ENCODE measurements at regions of chr17 and their contacts with region 1.

Region 1: DNA sequence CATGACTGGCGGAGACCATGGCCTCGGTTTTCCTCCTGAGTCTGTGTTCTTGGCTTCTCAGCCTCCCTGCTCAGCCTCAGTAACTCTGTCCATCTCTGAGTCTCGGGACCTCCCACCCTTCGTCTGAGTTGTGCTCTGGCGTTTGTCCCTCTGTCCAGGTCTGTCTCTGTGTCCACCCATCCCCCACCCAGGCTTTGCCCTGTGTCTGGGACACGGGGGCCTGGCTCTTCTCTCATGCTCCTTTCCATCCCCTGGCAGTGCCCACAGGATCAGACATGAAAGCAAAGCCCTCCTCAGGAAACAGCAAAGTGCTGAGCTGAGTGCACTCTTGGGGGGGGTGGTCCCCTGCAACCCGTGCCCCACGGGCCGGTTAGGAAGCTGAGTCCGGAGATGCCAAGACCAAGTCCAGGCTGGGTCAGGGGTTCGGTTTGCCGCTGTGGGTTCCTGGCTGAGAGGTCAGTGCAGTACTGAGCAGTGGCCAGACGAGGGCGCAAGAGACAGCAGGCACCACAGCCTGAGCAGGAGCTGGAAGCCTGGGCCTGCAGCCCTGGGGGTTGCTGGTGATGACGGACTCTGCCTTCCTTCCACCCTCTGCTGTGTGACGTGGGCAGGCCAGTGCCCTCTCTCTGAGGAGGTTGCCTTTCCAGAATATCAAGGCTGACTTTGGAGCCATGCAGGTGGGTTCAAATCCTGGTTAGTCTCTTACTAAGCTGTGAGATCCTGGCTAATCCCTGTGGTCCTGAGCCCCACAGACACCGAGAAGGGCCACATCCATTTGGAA is 2.5 kb downstream of the P2RX1 start:
- DNase-seq: peak; percentile 73
- H3K4me3 ChIP-seq: no peak overlapping the region
- H3K27ac ChIP-seq: no peak overlapping the region
- H3K4me1 ChIP-seq: peaks cover 15% of the 10 kb centered on the region
- H3K27me3 ChIP-seq: no peaks in the 10 kb centered on the region
- CTCF ChIP-seq: peak; percentile 97 to 99
- POLR2A ChIP-seq: no peak

Region 2: DNA sequence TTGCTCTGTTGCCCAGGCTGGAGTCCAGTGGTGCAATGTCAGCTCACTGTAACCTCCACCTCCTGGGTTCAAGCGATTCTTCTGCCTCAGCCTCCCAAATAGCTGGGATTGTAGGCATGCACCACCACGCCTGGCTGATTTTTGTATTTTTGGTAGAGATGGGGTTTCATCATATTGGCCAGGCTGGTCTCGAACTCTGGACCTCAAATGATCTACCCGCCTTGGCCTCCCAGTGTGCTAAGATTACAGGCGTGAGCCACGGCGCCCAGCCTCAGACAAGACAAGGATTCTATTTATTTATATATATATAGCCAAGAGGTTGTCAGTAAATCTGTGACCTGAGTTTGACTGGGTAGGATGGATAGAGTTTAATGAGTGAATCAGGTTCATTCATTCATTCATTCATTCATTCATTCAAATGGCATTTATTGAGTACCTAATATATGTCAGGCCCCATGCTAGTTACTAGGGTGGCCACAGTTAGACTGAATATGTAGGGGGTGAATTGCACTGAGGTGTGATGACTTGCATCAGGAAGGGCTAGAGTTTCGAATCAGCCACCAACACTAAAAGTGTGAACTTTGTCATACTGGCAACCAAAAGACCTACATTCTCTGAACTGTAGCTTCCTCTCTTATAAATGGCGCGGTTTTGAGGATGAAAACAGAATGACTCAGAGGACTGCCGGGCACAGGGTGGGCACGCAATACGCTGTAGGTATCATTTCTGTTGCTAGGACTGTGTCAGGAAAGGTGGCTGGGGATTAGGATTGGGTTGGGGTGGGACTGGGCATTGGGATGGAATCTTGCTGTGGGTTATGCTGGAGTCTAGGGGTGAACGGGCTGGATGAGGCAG is 150.6 kb before region 1 on chr17:
- CTCF ChIA-PET with region 1: no interaction called
- POLR2A ChIA-PET with region 1: no interaction called
- dilution Hi-C with region 1: no loop called
- intact Hi-C with region 1: no loop called
- DNase-seq: no peak
- H3K4me3 ChIP-seq: no peak overlapping the region
- H3K27ac ChIP-seq: no peak overlapping the region
- H3K4me1 ChIP-seq: peaks cover 2% of the 10 kb centered on the region
- H3K27me3 ChIP-seq: no peaks in the 10 kb centered on the region
- CTCF ChIP-seq: no peak
- POLR2A ChIP-seq: no peak

Region 3: DNA sequence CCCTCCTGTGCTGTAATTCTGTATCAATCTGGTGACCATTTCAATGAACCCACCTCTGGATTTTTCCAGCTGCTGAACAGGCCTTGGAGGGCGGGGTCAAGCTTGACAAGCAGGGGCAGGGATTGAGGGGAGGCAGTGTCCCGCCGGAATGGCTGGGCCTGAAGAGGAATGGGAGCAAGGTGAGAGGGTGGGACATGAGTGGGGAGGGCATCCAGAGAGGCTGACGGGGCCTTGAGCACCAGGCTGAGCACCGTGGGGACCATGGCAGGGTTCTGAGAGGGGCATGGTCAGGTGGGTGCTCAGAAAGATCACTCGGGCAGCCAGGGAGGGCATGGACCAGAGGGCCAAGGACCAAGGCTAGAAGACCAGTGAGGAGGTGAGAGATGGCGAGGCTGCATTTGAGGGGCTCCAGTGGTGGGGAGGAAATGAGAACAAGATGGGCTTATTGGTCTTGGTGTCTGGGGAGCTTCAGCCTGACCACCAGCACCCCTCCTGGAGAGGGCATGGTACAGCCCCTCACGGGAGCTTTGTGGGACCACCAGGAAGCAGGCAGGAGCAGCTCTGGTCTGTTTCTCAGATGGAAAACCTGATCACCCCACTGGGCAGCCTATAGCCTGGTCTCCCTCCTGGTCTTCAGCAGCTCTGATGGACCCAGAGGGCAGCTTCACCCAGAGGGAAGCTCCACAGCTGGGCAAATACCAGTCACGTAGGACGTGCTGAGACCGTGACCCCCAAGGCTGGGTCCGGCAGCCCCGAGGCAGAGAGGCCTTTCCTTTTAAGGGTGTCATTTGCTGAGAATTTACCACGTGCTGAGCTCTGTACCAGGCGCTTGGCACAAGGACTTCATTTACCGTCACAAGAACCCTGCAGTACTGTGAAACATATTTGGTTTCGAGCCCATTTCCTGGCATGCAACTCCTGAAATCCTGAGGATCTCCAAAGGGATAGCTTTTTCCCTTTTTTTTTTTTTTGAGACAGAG is 56.3 kb before region 1 on chr17:
- CTCF ChIA-PET with region 1: interaction called, 13 read pairs
- POLR2A ChIA-PET with region 1: no interaction called
- dilution Hi-C with region 1: no loop called
- intact Hi-C with region 1: no loop called
- DNase-seq: no peak
- H3K4me3 ChIP-seq: no peak overlapping the region
- H3K27ac ChIP-seq: no peak overlapping the region
- H3K4me1 ChIP-seq: no peaks in the 10 kb centered on the region
- H3K27me3 ChIP-seq: no peaks in the 10 kb centered on the region
- CTCF ChIP-seq: no peak
- POLR2A ChIP-seq: no peak

Region 4: GRCh38 chr17:3893003-3893719 is 20.6 kb before region 1 on chr17 and contains the start of gene CAMKK1:
- CTCF ChIA-PET with region 1: interaction called, 82 read pairs
- POLR2A ChIA-PET with region 1: no interaction called
- dilution Hi-C with region 1: no loop called
- intact Hi-C with region 1: no loop called
- DNase-seq: peak; percentile 83
- H3K4me3 ChIP-seq: peak within 1 kb of the TSS; percentile 41 to 59 (median 52)
- H3K27ac ChIP-seq: no peak within 1 kb of the TSS
- H3K4me1 ChIP-seq: peaks cover 52% of the 10 kb centered on the region
- H3K27me3 ChIP-seq: no peaks in the 10 kb centered on the region
- CTCF ChIP-seq: no peak
- POLR2A ChIP-seq: no peak
- total RNA-seq, gene CAMKK1: 5.7 and 6.1 TPM in 2 replicates

Region 5: GRCh38 chr17:3935140-3935542 is 21.4 kb after region 1 on chr17:
- CTCF ChIA-PET with region 1: interaction called, 47 read pairs
- POLR2A ChIA-PET with region 1: no interaction called
- dilution Hi-C with region 1: no loop called
- intact Hi-C with region 1: loop called (anchors 1 kb)
- DNase-seq: peak; percentile 75
- H3K4me3 ChIP-seq: no peak overlapping the region
- H3K27ac ChIP-seq: no peak overlapping the region
- H3K4me1 ChIP-seq: no peaks in the 10 kb centered on the region
- H3K27me3 ChIP-seq: no peaks in the 10 kb centered on the region
- CTCF ChIP-seq: peak; percentile 83 to 94
- POLR2A ChIP-seq: no peak

Region 6: GRCh38 chr17:4004517-4005295 is 91.0 kb after region 1 on chr17:
- CTCF ChIA-PET with region 1: interaction called, 84 read pairs
- POLR2A ChIA-PET with region 1: interaction called, 4 read pairs
- dilution Hi-C with region 1: no loop called
- intact Hi-C with region 1: loop called (anchors 1 kb)
- DNase-seq: peak; percentile 49
- H3K4me3 ChIP-seq: no peak overlapping the region
- H3K27ac ChIP-seq: no peak overlapping the region
- H3K4me1 ChIP-seq: peaks cover 9% of the 10 kb centered on the region
- H3K27me3 ChIP-seq: no peaks in the 10 kb centered on the region
- CTCF ChIP-seq: peak; percentile 90 to 92
- POLR2A ChIP-seq: no peak

Region 7: DNA sequence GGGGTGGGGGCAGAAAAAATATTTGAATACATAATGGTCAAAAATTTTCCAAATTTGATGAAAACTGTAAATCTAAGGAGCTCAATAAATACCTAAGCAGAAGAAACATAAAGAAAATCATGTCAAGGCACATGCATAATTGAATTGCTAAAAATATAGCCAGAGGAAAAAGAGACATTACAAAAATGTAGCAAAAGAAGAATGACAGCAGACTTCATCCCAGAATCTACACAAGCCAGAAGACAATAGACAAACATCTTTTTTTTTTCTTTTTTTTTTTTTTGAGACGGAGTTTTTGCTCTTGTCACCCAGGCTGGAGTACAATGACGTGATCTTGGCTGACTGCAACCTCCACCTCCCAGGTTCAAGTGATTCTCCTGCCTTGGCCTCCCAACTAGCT is 112.5 kb after region 1 on chr17:
- CTCF ChIA-PET with region 1: interaction called, 11 read pairs
- POLR2A ChIA-PET with region 1: no interaction called
- dilution Hi-C with region 1: no loop called
- intact Hi-C with region 1: no loop called
- DNase-seq: no peak
- H3K4me3 ChIP-seq: no peak overlapping the region
- H3K27ac ChIP-seq: no peak overlapping the region
- H3K4me1 ChIP-seq: no peaks in the 10 kb centered on the region
- H3K27me3 ChIP-seq: no peaks in the 10 kb centered on the region
- CTCF ChIP-seq: no peak
- POLR2A ChIP-seq: no peak

Measured in endothelial cell of umbilical vein (primary cell).